ENCODE measurements at regions of chr2 and their contacts with region 1.

Region 1: DNA sequence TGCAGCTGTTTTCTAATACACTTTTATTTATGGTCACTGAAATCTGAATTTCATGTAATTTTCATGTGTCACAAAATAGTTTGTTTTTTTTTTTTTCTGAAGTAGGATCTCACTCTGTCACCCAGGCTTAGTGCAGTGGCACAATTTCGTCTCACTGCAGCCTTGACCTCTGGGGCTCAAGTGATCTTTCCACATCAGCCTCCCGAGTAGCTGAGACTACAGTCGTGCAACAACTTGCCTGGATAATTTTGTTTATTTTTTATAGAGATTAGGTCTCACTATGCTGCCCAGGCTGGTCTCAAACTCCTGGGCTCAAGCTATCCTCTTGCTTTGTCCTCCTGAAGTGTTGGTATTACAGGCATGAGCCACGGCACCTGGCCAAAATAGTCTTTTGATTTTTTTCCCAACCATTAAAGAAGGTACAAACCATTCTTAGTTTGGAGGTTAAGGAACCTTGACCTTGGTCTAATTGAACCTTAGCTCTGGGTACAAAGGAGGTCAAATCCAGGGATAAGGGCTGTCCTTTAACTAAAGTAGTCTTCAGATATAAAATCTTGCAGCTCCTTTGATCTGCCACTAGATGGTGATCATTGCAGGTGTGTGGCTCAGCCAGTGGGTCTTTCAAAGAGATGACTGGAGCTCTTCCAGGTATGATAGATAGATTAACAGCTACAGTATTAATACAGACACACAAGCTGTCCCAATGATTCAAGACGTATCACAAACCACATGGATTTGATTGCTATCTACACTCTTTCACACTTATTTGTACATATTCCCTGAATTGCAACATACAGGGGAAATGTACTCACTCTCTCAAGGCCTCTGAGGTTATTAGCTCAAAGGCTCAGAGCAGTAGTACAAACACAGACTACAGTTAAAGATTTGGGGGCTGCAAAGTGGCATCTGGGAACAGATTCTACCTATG is 4.7 kb upstream of the KRCC1 start:
- DNase-seq: no peak
- ATAC-seq: no peak

Region 2: DNA sequence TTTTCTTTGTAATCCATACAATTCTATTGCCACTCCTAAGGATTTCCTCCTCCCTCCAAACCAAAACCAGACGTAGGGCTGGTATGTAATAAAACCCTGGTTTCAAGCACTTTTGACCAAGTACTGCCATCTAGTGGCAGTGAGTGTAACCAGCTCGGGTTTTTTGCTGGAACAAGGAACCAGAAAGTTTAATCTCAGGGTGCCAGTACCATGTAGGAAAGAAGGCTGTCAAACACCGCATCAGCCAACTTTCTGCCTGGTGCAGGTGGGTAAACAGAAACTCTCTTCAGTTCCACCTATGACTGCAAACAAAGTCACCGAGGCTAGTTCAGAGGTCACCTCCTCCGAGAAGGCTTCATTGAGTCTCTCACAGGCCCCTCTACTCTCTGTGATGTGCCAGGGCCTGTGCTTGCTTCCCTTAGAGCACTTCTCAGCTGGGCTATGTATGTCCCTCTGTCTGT is 99.7 kb after region 1 on chr2:
- intact Hi-C with region 1: loop called (anchors 1 kb)
- DNase-seq: no peak
- ATAC-seq: peak; percentile 62